ENCODE measurements at regions of chr15 and their contacts with region 1.

Region 1: GRCh38 chr15:63473999-63474809 is 30.2 kb upstream of the USP3 start:
- DNase-seq: peak; percentile 59
- ATAC-seq: peak; percentile 64
- H3K4me3 Mint-ChIP-seq: peak overlapping the region; percentile 83
- H3K27ac Mint-ChIP-seq: peak overlapping the region; percentile 99
- H3K4me1 Mint-ChIP-seq: peaks cover 75% of the 10 kb centered on the region
- H3K27me3 Mint-ChIP-seq: no peaks in the 10 kb centered on the region
- CTCF ChIP-seq: no peak

Region 2: GRCh38 chr15:63487076-63487757 is 13.0 kb after region 1 on chr15:
- CTCF ChIA-PET with region 1: interaction called, 30 read pairs
- POLR2A ChIA-PET with region 1: interaction called, 116 read pairs
- intact Hi-C with region 1: loop called (anchors 1 kb)
- DNase-seq: peak; percentile 80
- ATAC-seq: peak; percentile 69
- H3K4me3 Mint-ChIP-seq: peak overlapping the region; percentile 75
- H3K27ac Mint-ChIP-seq: peak overlapping the region; percentile 83
- H3K4me1 Mint-ChIP-seq: peaks cover 83% of the 10 kb centered on the region
- H3K27me3 Mint-ChIP-seq: no peaks in the 10 kb centered on the region
- CTCF ChIP-seq: no peak

Region 3: DNA sequence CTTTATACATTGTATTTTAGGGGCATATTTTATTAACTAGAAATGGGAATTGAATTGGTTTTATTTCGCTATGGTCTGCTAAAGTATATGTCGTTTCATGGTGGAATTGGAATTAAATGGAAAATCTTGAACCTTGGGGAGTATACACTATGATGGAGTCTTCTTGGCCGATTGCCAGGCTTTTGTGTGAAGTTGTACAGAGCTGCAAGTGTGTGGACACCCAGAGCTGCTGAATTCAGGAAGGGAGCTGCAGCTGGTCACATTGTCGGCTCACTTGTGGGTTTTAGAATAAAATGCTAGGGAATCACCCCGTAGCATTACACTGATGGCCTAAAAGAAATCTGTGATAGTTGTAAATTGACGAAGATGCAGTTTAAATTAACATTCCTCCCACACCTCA is 65.3 kb after region 1 on chr15:
- CTCF ChIA-PET with region 1: interaction called, 3 read pairs
- POLR2A ChIA-PET with region 1: interaction called, 5 read pairs
- intact Hi-C with region 1: loop called (anchors 2 kb)
- DNase-seq: no peak
- ATAC-seq: no peak
- H3K4me3 Mint-ChIP-seq: no peak overlapping the region
- H3K27ac Mint-ChIP-seq: peak overlapping the region; percentile 79
- H3K4me1 Mint-ChIP-seq: peaks cover 83% of the 10 kb centered on the region
- H3K27me3 Mint-ChIP-seq: no peaks in the 10 kb centered on the region
- CTCF ChIP-seq: no peak

Region 4: GRCh38 chr15:64180235-64180837 is 706.1 kb after region 1 on chr15:
- CTCF ChIA-PET with region 1: no interaction called
- POLR2A ChIA-PET with region 1: no interaction called
- intact Hi-C with region 1: no loop called
- DNase-seq: peak; percentile 40
- ATAC-seq: peak; percentile 99
- H3K4me3 Mint-ChIP-seq: peak overlapping the region; percentile 56
- H3K27ac Mint-ChIP-seq: peak overlapping the region; percentile 85
- H3K4me1 Mint-ChIP-seq: peaks cover 26% of the 10 kb centered on the region
- H3K27me3 Mint-ChIP-seq: no peaks in the 10 kb centered on the region
- CTCF ChIP-seq: no peak